Right lobe of liver (tissue), 6 donors: ENCODE measurements at regions of chr17 and their contacts with region 1.

Region 1: DNA sequence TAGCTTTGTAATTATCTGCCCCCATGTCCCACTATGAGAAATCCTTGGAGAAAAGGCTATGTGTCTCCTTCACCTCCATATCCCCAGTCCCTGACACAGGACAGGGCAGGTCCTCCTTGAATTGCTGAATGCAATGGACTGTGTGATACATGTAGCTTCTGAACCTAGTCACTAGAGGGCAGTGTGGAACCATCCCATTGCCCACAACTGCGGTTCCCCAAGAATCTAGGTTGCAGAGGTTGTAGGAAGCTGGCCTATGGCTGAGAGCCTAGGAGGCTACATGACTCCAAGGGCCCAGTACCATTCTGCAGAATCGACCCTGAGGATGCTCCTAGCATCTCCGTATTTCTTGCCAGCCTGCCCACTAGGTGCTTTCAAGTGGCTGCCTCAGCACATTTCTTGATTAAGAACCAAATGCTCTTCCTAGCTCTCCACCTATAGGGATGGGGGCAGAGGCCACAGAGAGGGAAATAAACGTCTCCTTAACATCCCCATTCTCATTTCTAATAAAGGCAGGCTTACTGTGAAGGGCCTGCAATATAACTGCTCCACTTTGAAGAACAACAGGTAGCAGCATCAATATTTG is 394.0 kb downstream of the CA10 start:
- DNase-seq: peak in 2 of 3 donors; percentile 22 to 52
- ATAC-seq: peak; percentile 89 to 97 (median 94)
- H3K4me3 ChIP-seq: no peak overlapping the region
- H3K27ac ChIP-seq: no peak overlapping the region
- H3K4me1 ChIP-seq: no peaks in the 10 kb centered on the region
- H3K27me3 ChIP-seq: no peaks in the 10 kb centered on the region
- CTCF ChIP-seq: peak; percentile 54 to 84 (median 82)
- POLR2A ChIP-seq: no peak

Region 2: GRCh38 chr17:51850201-51850600 is 85.7 kb after region 1 on chr17:
- intact Hi-C with region 1: no loop called
- DNase-seq: no peak
- ATAC-seq: no peak
- H3K4me3 ChIP-seq: no peak overlapping the region
- H3K27ac ChIP-seq: no peak overlapping the region
- H3K4me1 ChIP-seq: no peaks in the 10 kb centered on the region
- H3K27me3 ChIP-seq: no peaks in the 10 kb centered on the region
- CTCF ChIP-seq: no peak
- POLR2A ChIP-seq: no peak

Region 3: GRCh38 chr17:52106638-52107261 is 342.3 kb after region 1 on chr17:
- intact Hi-C with region 1: loop called in 1 of 2 experiments (anchors 10 kb)
- DNase-seq: peak in 1 of 3 donors; percentile 21
- ATAC-seq: peak; percentile 65 to 76 (median 68)
- H3K4me3 ChIP-seq: no peak overlapping the region
- H3K27ac ChIP-seq: no peak overlapping the region
- H3K4me1 ChIP-seq: no peaks in the 10 kb centered on the region
- H3K27me3 ChIP-seq: peaks cover 0 to 5% of the 10 kb centered on the region in 2 donors
- CTCF ChIP-seq: peak; percentile 72 to 85 (median 76)
- POLR2A ChIP-seq: no peak